Naive thymus-derived CD4-positive, alpha-beta T cell (primary cell): ENCODE measurements at regions of chr9 and their contacts with region 1.

Region 1: GRCh38 chr9:137658781-137659180 is 40.0 kb downstream of the EHMT1 start:
- DNase-seq: peak in 1 of 9 donors; percentile 15
- ATAC-seq: no peak
- H3K4me3 ChIP-seq: no peak overlapping the region
- H3K4me3 Mint-ChIP-seq: peak overlapping the region in 4 of 10 donors; percentile 13 to 35 (median 26)
- H3K27ac ChIP-seq: no peak overlapping the region
- H3K27ac Mint-ChIP-seq: peak overlapping the region in 4 of 9 donors; percentile 38 to 59 (median 44)
- H3K4me1 ChIP-seq: peaks cover 0 to 6% of the 10 kb centered on the region in 2 donors
- H3K4me1 Mint-ChIP-seq: peaks cover 26 to 57% (median 53%) of the 10 kb centered on the region in 7 donors
- H3K27me3 ChIP-seq: no peaks in the 10 kb centered on the region
- H3K27me3 Mint-ChIP-seq: no peaks in the 10 kb centered on the region

Region 2: DNA sequence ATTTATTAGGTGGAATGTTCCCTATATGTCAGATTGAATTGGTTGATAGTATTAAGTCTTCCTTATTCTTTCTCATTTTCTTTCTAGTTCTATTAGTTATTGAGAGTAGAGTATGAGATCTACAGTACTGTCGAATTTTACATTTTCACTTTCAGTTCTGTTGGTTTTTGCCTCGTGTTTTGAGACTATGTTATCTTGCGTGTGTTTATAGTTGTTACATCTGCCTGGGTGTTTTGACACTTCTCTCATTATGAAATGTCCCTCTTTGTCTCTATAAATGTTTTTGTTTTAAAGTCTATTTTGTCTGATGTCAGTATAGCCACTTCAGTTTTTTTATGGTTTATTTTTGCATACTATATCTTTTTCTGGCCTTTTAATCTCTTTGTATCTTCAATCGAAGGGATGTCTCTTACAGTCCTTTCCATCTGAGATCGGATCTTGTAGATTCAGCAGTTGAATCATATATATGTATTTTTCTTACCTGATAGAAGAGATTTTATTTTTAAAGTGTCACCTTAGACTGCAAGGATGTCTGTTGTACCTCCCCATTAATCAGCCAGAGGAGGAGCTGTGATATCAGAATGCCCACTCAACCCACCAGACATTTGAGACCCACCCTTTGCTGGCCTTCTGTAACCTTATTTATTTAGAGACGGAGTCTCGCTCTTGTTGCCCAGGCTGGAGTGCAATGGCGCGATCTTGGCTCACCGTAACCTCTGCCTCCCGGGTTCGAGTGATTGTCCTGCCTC is 19.3 kb before region 1 on chr9:
- CTCF ChIA-PET with region 1: interaction called, 3 read pairs
- POLR2A ChIA-PET with region 1: interaction called, 3 read pairs
- intact Hi-C with region 1: loop called in 1 of 2 experiments (anchors 2 kb)
- DNase-seq: peak in 5 of 9 donors; percentile 19 to 45 (median 28)
- ATAC-seq: peak; percentile 88
- H3K4me3 ChIP-seq: peak overlapping the region; percentile 53
- H3K4me3 Mint-ChIP-seq: peak overlapping the region; percentile 74 to 90 (median 82)
- H3K27ac ChIP-seq: peak overlapping the region; percentile 71
- H3K27ac Mint-ChIP-seq: peak overlapping the region; percentile 81 to 93 (median 88)
- H3K4me1 ChIP-seq: peaks cover 10 to 21% of the 10 kb centered on the region in 2 donors
- H3K4me1 Mint-ChIP-seq: peaks cover 40 to 71% (median 47%) of the 10 kb centered on the region in 7 donors
- H3K27me3 ChIP-seq: no peaks in the 10 kb centered on the region
- H3K27me3 Mint-ChIP-seq: no peaks in the 10 kb centered on the region

Region 3: GRCh38 chr9:137715321-137715720 is 56.5 kb after region 1 on chr9:
- CTCF ChIA-PET with region 1: no interaction called
- POLR2A ChIA-PET with region 1: no interaction called
- intact Hi-C with region 1: no loop called
- DNase-seq: no peak
- ATAC-seq: no peak
- H3K4me3 ChIP-seq: peak overlapping the region; percentile 3
- H3K4me3 Mint-ChIP-seq: peak overlapping the region in 7 of 10 donors; percentile 5 to 72 (median 42)
- H3K27ac ChIP-seq: no peak overlapping the region
- H3K27ac Mint-ChIP-seq: peak overlapping the region in 7 of 9 donors; percentile 31 to 96 (median 80)
- H3K4me1 ChIP-seq: peaks cover 7 to 17% of the 10 kb centered on the region in 2 donors
- H3K4me1 Mint-ChIP-seq: peaks cover 20 to 52% (median 34%) of the 10 kb centered on the region in 7 donors
- H3K27me3 ChIP-seq: no peaks in the 10 kb centered on the region
- H3K27me3 Mint-ChIP-seq: no peaks in the 10 kb centered on the region